ENCODE measurements at regions of chr6 and their contacts with region 1.

Region 1: GRCh38 chr6:37041521-37041920 is 36.1 kb downstream of the FGD2 start:
- DNase-seq: no peak
- H3K4me3 Mint-ChIP-seq: no peak overlapping the region
- H3K27ac Mint-ChIP-seq: peak overlapping the region; percentile 68
- H3K4me1 Mint-ChIP-seq: peaks cover 48% of the 10 kb centered on the region
- H3K27me3 Mint-ChIP-seq: no peaks in the 10 kb centered on the region

Region 2: DNA sequence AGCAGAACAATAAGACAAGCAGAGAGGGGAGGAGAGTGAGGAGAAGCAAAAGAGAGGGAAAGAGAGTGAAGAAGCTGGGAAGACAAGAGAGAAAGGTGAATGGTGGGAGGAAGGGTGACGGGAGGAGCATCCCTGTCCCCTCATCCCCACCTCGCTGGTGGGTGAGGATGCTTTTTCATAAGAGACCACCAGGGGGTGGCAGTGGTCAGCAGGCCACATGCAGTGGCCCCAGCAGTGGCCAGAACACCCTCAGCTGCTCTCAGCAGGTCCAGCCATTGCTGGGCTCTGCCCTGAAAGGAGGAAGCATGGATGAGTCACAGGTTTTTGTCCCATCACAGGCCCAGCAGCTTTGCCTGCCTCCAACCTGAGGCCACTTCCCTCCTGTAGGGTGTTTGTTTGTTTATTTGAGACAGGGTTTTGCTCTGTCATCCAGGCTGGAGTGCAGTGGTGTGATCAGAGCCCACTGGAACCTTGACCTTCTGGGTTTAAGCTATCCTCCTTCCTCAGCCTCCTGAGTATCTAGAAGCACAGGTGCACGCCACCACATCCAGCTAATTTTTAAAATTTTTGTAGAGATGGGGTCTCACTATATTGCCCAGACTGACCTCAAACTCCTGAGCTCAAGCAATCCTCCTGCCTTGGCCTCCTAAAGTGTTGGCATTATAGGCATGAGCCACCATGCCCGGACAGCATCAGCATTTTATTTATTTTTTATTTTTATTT is 12.1 kb before region 1 on chr6:
- intact Hi-C with region 1: loop called (anchors 1 kb)
- DNase-seq: peak; percentile 33
- H3K4me3 Mint-ChIP-seq: no peak overlapping the region
- H3K27ac Mint-ChIP-seq: peak overlapping the region; percentile 56
- H3K4me1 Mint-ChIP-seq: peaks cover 53% of the 10 kb centered on the region
- H3K27me3 Mint-ChIP-seq: no peaks in the 10 kb centered on the region

Region 3: GRCh38 chr6:37965964-37966676 is 924.6 kb after region 1 on chr6:
- intact Hi-C with region 1: no loop called
- DNase-seq: no peak
- H3K4me3 Mint-ChIP-seq: no peak overlapping the region
- H3K27ac Mint-ChIP-seq: no peak overlapping the region
- H3K4me1 Mint-ChIP-seq: peaks cover 35% of the 10 kb centered on the region
- H3K27me3 Mint-ChIP-seq: no peaks in the 10 kb centered on the region

Measured in activated T-helper 2 cell treated with anti-CD3 and anti-CD28 coated beads, Interferon-gamma antibody, Interleukin-2, Interleukin-4, amounts not matched to agents 10 μg/mL and 5 μg/mL and 100 μg/mL, durations not matched to agents 14 hours and 24 hours and 36 hours (primary cell).